Calu3 (cell line): ENCODE measurements at regions of chr6 and their contacts with region 1.

Region 1: GRCh38 chr6:154675602-154676088 is 57.6 kb upstream of the SCAF8 start:
- DNase-seq: peak; percentile 77
- H3K4me3 Mint-ChIP-seq: no peak overlapping the region
- H3K27ac Mint-ChIP-seq: no peak overlapping the region
- H3K4me1 Mint-ChIP-seq: no peaks in the 10 kb centered on the region
- H3K27me3 Mint-ChIP-seq: no peaks in the 10 kb centered on the region
- CTCF ChIP-seq: peak; percentile 66

Region 2: DNA sequence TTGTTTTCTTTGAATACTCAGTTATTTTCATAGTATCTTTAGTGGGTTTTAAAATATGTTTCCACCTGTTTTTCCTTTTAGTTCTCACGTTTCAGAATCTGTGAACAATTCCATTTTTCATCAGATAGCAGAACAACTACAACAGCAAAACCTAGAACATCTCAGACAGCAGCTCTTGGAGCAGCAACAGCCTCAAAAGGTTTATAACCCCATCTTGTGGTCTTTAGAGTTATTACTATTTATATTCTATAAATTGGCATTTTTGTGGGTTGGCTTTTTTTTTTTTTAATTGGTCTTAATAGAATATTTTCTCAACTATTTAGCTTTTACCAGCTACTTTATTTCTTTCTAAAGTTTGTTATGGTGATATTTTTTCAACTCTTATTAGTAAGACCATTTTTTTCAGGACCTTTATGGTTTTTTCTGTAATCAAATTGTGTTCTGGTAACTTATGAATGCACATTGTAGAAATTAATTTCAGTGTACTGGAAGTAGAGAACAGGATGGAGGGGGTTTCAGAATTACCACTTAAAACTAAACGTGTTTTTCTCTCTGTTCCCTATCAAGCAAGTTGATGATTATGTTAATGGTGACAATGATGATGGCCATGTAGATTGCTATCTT is 129.8 kb after region 1 on chr6:
- CTCF ChIA-PET with region 1: interaction called, 20 read pairs
- intact Hi-C with region 1: loop called (anchors 1 kb)
- DNase-seq: no peak
- H3K4me3 Mint-ChIP-seq: no peak overlapping the region
- H3K27ac Mint-ChIP-seq: no peak overlapping the region
- H3K4me1 Mint-ChIP-seq: no peaks in the 10 kb centered on the region
- H3K27me3 Mint-ChIP-seq: no peaks in the 10 kb centered on the region
- CTCF ChIP-seq: no peak

Region 3: GRCh38 chr6:154824076-154824475 is 148.4 kb after region 1 on chr6:
- CTCF ChIA-PET with region 1: no interaction called
- intact Hi-C with region 1: loop called (anchors 5 kb)
- DNase-seq: no peak
- H3K4me3 Mint-ChIP-seq: no peak overlapping the region
- H3K27ac Mint-ChIP-seq: no peak overlapping the region
- H3K4me1 Mint-ChIP-seq: peaks cover 11% of the 10 kb centered on the region
- H3K27me3 Mint-ChIP-seq: no peaks in the 10 kb centered on the region
- CTCF ChIP-seq: no peak

Region 4: DNA sequence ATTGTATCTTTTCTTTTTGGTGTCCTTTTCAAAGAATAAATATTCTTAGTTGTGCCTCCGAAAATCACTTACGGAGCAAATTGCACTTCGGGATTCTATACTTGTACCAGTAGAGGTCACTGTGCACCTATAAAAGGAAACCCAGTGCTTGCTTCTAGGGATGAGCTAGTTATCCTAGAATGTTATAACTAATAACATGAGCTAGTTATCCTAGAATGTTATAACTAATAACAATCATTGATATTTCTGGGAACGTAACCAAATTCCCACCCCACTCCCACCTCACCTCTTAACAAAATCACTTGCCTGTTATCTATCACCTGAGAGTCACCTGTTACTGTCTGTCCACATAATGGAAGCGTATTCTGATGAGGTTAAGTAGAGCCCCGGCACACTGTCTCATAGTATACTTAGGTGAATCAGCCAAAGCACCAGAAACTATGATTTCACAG is 192.5 kb after region 1 on chr6:
- CTCF ChIA-PET with region 1: interaction called, 5 read pairs
- intact Hi-C with region 1: loop called (anchors 5 kb)
- DNase-seq: peak; percentile 7
- H3K4me3 Mint-ChIP-seq: no peak overlapping the region
- H3K27ac Mint-ChIP-seq: no peak overlapping the region
- H3K4me1 Mint-ChIP-seq: peaks cover 9% of the 10 kb centered on the region
- H3K27me3 Mint-ChIP-seq: no peaks in the 10 kb centered on the region
- CTCF ChIP-seq: peak; percentile 23